ENCODE measurements at regions of chr4 and their contacts with region 1.

Region 1: GRCh38 chr4:86895692-86896488 is 3.7 kb upstream of the C4orf36 start:
- DNase-seq: no peak
- H3K4me3 ChIP-seq: no peak overlapping the region
- H3K27ac ChIP-seq: no peak overlapping the region
- H3K4me1 ChIP-seq: peaks cover 3 to 15% (median 5%) of the 10 kb centered on the region in 4 donors
- H3K27me3 ChIP-seq: no peaks in the 10 kb centered on the region
- CTCF ChIP-seq: peak; percentile 60 to 80 (median 72)
- EP300 ChIP-seq: no peak
- POLR2A ChIP-seq: no peak

Region 2: DNA sequence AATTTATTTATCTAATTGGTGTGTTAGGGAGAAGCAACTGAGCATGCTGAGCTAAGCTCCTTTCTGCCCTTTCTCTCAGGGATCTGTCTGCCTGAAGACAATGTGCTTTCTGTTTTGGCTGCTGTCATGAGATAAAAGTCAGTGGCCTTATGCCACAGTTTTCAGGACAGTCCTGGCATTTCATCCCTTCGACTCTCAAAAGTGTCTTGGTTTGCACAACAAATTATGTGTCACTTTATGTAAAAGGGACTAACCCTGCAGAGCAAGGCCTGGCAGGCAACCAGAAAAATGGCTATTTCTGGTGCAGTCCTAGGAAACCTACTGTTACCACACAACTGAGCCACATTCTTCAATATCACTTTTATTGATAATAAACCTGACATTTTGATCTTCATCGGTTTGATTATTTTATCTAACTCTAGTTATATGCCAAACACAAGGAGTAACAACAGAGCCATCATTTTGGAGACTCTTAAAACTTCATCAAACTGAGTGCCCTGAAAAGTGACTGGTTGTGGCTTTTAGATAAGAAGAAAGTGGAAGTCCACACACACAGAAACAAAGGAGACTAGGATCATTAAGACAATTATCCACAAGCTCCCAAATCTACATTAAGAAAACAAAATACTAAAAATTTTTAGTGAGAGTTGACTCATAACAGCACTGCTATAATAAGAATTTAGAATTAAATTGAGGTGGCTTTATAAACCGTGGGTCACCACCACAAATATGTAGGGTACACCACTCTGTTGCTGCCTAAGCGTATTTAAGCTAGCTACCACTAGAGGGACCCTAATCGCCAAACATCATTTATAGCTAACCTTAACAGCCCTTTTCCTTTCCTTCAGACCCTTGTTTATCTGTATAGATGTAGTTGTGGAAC is 397.7 kb before region 1 on chr4:
- in situ Hi-C with region 1: loop called (anchors 5 to 10 kb)
- intact Hi-C with region 1: loop called (anchors 5 kb)
- DNase-seq: no peak
- H3K4me3 ChIP-seq: no peak overlapping the region
- H3K27ac ChIP-seq: no peak overlapping the region
- H3K4me1 ChIP-seq: peaks cover 0 to 3% (median 0%) of the 10 kb centered on the region in 4 donors
- H3K27me3 ChIP-seq: no peaks in the 10 kb centered on the region
- CTCF ChIP-seq: peak; percentile 58 to 74 (median 67)
- EP300 ChIP-seq: no peak
- POLR2A ChIP-seq: no peak

Region 3: GRCh38 chr4:86934771-86935565 is 39.1 kb after region 1 on chr4 and contains the start of gene AFF1:
- in situ Hi-C with region 1: no loop called
- intact Hi-C with region 1: no loop called
- DNase-seq: peak; percentile 96
- H3K4me3 ChIP-seq: peak within 1 kb of the TSS; percentile 81 to 97 (median 94)
- H3K27ac ChIP-seq: peak within 1 kb of the TSS; percentile 99 to 100 (median 99)
- H3K4me1 ChIP-seq: peaks cover 25 to 50% (median 43%) of the 10 kb centered on the region in 4 donors
- H3K27me3 ChIP-seq: no peaks in the 10 kb centered on the region
- CTCF ChIP-seq: peak; percentile 39 to 57 (median 44)
- EP300 ChIP-seq: no peak
- POLR2A ChIP-seq: peak; percentile 84
- total RNA-seq, gene AFF1: 77.1 to 151 (median 97.0) TPM